ENCODE measurements at regions of chr13 and their contacts with region 1.

Region 1: DNA sequence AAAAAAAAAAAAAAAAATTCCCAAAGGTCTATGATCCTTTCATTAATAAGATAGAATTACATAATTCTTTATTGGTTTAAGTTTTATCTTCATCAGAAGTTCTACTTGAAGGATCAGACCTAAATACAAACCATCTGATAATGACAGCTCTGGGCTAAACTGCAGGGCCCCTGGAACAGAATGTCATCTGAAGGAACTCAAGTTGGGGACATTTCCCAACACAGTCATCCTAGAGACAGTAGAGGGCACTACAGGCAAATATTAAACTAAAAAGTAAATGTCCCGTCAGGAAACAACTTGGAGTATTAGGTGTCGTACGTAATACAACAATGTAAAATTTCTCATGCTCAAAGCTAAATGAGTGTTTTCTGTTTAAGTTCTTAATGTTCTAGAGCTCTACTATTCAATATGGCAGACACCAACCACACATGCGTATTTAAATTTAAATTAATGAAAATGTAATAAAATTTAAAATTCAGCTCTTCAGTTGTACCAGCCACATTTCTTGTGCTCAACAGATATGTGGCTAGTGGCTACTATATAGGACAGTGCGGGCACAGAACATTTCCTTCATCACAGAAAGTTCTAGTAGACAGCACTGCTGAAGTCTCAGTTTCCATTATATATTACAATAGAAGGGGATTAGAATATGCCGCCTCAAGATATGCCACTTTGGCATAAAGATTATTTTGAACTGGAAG is 21.8 kb upstream of the NAXD start:
- DNase-seq: peak in 8 of 42 donors; percentile 8 to 53 (median 25)

Region 2: GRCh38 chr13:110471833-110472162 is 121.8 kb before region 1 on chr13:
- intact Hi-C with region 1: no loop called
- DNase-seq: peak; percentile 17 to 84 (median 62)

Region 3: DNA sequence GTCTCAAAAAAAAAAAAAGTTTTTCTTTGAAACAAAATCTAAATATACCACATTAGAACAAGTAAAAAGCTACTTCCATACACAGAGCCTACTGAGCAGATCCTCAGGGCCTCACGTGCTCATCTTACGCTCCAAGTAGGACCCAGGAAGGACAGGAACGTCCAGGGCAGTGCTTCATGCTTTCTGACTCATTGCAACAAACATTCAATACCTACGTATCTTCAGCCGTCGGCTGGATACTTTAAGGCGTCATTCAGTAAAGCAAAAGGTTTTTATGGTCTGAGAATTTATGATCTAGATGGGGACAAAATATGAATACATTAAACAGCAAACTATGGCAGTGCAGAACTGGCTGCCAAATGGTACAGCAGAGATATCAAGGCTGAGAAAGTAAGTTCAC is 91.7 kb after region 1 on chr13:
- intact Hi-C with region 1: no loop called
- DNase-seq: peak in 1 of 42 donors; percentile 14

Region 4: GRCh38 chr13:110819203-110820014 is 225.8 kb after region 1 on chr13:
- intact Hi-C with region 1: loop called (anchors 10 kb)
- DNase-seq: peak; percentile 54 to 93 (median 82)

Measured in head of caudate nucleus (tissue), 42 donors.